ENCODE measurements at regions of chr13 and their contacts with region 1.

Region 1: GRCh38 chr13:26186118-26186870 is 35.8 kb downstream of the RNF6 start:
- DNase-seq: peak; percentile 88
- H3K4me3 ChIP-seq: peak overlapping the region; percentile 72
- H3K27ac ChIP-seq: peak overlapping the region; percentile 87
- H3K4me1 ChIP-seq: peaks cover 19% of the 10 kb centered on the region
- H3K27me3 ChIP-seq: no peaks in the 10 kb centered on the region
- CTCF ChIP-seq: peak; percentile 43

Region 2: DNA sequence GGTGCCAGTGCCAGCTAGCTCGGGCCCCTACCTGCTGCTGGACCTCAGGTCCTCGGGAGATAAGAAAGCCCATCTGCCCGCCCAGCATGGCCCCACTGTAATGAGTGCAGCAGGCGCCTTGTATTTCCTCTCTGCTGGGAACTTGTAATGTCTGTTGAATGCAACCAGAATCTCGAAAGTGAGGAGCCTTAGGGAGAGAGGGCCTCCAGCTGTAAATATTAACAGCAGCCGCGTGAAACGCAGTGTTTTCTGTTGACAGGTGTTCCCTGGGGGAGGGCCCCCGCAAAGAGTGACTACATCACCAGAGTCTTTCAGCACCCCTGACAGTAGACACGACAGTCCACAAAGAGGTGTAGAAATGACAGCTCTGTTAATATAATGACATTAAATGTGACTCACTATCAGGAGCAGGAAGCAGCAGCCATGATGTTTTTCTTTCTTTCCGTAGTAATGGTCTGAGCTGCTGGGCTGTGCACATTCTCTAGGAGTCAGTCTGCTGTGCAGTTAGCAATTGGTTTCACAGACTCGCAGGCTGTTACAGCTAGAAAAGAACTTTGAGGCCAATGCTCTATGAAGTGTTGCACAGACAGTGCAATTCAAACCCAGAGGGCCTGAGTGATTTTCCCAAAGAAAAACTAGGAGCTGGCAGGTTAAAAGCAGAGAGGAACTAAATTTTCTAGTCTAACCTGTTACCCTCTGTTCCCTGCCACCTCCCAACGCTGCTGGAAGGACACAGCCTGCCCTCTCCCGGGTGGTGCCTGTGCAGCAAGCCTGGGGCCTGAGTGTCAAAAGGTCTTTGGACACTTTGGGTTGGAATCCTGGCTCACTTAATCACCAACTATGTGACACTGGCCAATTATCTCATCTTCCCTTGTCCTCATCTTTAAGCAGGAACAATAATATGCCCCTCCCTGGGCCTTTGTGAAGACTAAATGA is 312.6 kb after region 1 on chr13:
- intact Hi-C with region 1: loop called (anchors 10 kb)
- DNase-seq: no peak
- H3K4me3 ChIP-seq: no peak overlapping the region
- H3K27ac ChIP-seq: peak overlapping the region; percentile 31
- H3K4me1 ChIP-seq: peaks cover 8% of the 10 kb centered on the region
- H3K27me3 ChIP-seq: peaks cover 47% of the 10 kb centered on the region
- CTCF ChIP-seq: no peak

Region 3: GRCh38 chr13:26698392-26699196 is 512.3 kb after region 1 on chr13:
- intact Hi-C with region 1: loop called (anchors 5 kb)
- DNase-seq: peak; percentile 79
- H3K4me3 ChIP-seq: peak overlapping the region; percentile 39
- H3K27ac ChIP-seq: no peak overlapping the region
- H3K4me1 ChIP-seq: peaks cover 13% of the 10 kb centered on the region
- H3K27me3 ChIP-seq: peaks cover 3% of the 10 kb centered on the region
- CTCF ChIP-seq: peak; percentile 98